ENCODE measurements at regions of chr2 and their contacts with region 1.

Region 1: DNA sequence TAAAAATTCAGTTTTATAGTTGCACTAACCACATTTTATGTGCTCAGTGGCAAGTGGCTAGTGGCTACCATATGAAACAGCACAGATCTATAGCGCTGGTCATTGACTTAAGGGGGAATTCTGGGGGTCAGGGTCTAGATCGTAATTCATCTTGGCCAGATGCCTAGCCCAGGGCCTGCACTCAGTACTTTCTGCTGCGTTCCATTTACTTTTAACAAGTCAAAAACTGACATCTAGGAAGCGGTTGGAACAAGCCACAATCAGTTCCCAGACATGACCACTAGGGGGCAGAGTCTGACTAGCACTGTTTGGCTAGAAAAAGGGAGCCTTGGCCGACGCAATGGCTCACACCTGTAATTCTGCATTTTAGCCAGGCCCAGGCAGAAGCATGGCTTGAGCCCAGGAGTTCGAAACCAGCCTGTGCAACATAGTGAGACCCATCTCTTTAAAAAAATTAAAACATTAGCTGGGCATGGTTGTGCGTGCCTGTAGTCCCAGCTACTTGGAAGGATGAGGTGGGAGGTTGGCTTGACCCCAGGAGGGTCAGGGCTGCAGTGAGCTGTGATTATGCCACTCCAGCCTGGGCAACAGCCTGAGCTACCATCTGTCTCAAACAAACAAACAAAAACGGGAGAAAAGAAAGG is 9.0 kb upstream of the TMBIM1 start:
- DNase-seq: peak; percentile 91
- H3K4me3 ChIP-seq: no peak overlapping the region
- H3K27ac ChIP-seq: no peak overlapping the region
- H3K4me1 ChIP-seq: peaks cover 0 to 8% (median 1%) of the 10 kb centered on the region in 4 donors
- H3K27me3 ChIP-seq: no peaks in the 10 kb centered on the region
- CTCF ChIP-seq: peak; percentile 91 to 97 (median 95)
- EP300 ChIP-seq: no peak
- POLR2A ChIP-seq: no peak

Region 2: DNA sequence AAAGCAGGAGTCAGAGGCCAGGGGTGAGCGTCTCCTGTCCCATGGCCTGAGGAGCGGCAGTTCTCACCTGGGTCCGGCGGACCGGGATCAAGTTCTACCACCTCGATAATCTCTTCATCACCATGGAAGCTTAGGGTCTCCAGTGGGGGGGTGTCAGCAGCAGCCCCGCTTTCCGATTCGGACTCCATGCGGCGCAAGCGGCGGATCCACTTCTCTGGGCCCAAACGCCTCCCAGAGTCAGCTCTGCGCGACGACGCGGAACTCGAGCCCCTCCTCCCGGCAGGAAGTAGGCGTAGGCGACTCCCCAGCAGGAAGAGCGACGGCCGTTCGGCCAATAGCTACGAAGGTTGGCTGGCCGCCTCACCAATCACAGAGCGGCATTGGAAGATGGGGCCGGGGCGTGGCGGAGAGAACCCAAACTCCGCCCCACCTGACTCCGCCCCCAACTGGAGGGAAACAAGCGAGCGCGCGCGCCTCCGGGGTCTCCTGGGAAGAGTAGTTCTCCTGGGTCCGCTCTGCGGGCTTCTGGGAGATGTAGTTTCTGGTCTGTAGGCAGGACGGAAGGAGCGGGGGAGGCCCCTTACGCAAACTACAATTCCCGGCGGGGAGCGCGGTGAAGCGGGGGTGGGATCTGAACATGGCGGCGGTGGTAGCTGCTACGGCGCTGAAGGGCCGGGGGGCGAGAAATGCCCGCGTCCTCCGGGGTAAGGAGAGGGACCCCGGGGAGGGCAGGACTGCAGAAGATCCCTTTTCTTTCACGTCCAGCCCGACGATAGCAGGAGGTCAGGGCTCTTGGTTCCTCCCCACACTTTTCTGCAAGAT is 31.2 kb before region 1 on chr2 and contains the starts of genes AAMP and PNKD:
- intact Hi-C with region 1: no loop called
- DNase-seq: peak; percentile 100
- H3K4me3 ChIP-seq: peak within 1 kb of the TSS; percentile 76 to 94 (median 88)
- H3K27ac ChIP-seq: peak within 1 kb of the TSS; percentile 79 to 87 (median 84)
- H3K4me1 ChIP-seq: peaks cover 0 to 51% (median 38%) of the 10 kb centered on the region in 4 donors
- H3K27me3 ChIP-seq: no peaks in the 10 kb centered on the region
- CTCF ChIP-seq: no peak
- EP300 ChIP-seq: peak in 1 of 4 donors; percentile 10
- POLR2A ChIP-seq: peak; percentile 73 to 76
- total RNA-seq, gene AAMP: 85.7 to 103 (median 90.0) TPM
- total RNA-seq, gene PNKD: 46.8 to 95.1 (median 69.1) TPM

Region 3: GRCh38 chr2:218357236-218358159 is 56.2 kb after region 1 on chr2:
- intact Hi-C with region 1: loop called (anchors 2 kb)
- DNase-seq: no peak
- H3K4me3 ChIP-seq: no peak overlapping the region
- H3K27ac ChIP-seq: no peak overlapping the region
- H3K4me1 ChIP-seq: peaks cover 0 to 8% (median 1%) of the 10 kb centered on the region in 4 donors
- H3K27me3 ChIP-seq: no peaks in the 10 kb centered on the region
- CTCF ChIP-seq: no peak
- EP300 ChIP-seq: no peak
- POLR2A ChIP-seq: no peak

Region 4: DNA sequence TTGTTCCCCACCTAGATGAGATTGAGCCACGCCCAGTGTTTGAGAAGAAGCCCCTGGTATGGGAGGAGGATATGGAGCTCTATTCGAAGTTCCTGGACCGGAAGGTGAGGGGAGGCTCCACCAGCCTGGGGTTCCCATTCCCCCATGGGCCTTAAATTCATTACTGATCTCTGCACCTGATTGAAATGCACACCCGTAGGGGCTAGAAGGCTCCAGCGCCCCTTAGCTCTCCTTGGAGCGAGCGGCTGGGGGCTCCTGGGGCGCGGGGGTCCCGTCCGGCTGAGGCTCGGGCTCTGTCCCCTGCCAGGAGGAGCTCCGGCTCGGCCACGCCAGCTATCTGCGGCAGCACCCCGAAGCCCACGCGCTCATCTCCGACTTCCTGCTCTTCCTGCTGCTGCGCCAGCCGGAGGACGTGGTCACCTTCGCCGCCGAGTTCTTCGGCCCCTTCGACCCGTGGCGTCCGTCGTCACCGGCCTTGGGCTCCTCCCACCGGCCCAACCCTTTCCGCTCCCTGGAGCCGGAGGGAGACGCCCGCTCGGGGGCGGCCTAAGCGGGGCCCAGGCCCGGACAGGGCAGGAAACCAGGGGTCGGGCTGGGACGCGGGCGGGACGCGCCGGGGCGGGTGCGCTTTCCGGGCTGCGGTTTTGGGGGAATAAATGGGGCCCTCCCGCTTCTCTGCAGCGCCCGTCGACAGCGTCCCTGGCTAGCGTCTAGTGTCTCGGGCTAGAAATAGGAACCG is 66.3 kb after region 1 on chr2:
- intact Hi-C with region 1: no loop called
- DNase-seq: peak; percentile 94
- H3K4me3 ChIP-seq: peak overlapping the region; percentile 39 to 55 (median 49)
- H3K27ac ChIP-seq: peak overlapping the region; percentile 77 to 87 (median 82)
- H3K4me1 ChIP-seq: peaks cover 0 to 30% (median 21%) of the 10 kb centered on the region in 4 donors
- H3K27me3 ChIP-seq: no peaks in the 10 kb centered on the region
- CTCF ChIP-seq: no peak
- EP300 ChIP-seq: peak in 1 of 4 donors; percentile 41
- POLR2A ChIP-seq: peak; percentile 81 to 89

Region 5: DNA sequence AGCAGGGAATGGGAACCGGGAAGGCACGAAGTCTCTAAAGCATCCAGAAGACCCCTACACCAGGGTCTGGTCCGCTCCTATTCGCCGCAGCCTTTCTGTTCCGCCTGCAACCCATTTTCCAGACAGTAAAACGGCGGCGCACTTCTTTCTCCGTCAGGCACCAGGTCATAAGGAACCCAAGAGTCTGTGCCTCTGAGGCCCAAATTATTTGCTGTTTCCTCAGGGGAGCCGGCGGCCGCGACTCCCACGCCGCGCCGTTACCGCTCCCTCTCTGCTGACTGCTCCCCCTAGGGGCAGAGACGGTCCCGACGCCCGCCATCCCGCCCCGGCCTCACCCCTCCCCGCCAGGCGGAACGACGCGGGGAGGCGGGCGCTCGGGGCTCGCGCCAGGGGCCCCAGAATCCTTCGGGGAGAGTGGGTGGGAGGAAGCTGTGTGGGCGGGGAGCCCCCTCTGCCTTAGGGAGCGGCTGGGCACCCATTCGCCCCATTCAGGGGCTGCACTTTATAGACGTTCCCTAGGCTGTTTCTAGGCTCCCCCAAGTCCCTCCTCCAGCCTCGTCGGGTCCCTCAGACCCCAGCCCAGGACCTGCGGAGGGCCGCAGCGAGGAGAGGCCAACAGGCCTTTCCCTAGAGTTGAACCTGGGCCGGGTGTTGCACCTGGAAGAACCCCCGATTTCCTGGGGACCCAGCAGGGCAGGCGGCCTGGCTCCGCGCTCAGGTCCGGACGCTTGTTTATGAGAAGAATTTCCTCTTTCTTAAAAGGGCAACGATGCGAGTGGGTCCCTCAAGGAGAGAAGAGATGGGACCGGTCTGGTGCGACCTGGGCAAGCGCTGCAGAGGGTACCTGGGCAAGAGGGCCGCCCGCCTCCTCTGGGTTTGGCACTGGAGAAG is 94.7 kb after region 1 on chr2:
- intact Hi-C with region 1: loop called (anchors 1 kb)
- DNase-seq: peak; percentile 98
- H3K4me3 ChIP-seq: peak overlapping the region; percentile 92 to 100 (median 98)
- H3K27ac ChIP-seq: peak overlapping the region; percentile 97 to 100 (median 100)
- H3K4me1 ChIP-seq: peaks cover 0 to 38% (median 31%) of the 10 kb centered on the region in 4 donors
- H3K27me3 ChIP-seq: no peaks in the 10 kb centered on the region
- CTCF ChIP-seq: peak; percentile 89 to 97 (median 94)
- EP300 ChIP-seq: peak in 2 of 4 donors; percentile 10 to 16
- POLR2A ChIP-seq: peak; percentile 54

Region 6: GRCh38 chr2:218448934-218449333 is 147.6 kb after region 1 on chr2:
- intact Hi-C with region 1: no loop called
- DNase-seq: no peak
- H3K4me3 ChIP-seq: no peak overlapping the region
- H3K27ac ChIP-seq: no peak overlapping the region
- H3K4me1 ChIP-seq: no peaks in the 10 kb centered on the region
- H3K27me3 ChIP-seq: no peaks in the 10 kb centered on the region
- CTCF ChIP-seq: no peak
- EP300 ChIP-seq: no peak
- POLR2A ChIP-seq: no peak

Measured in sigmoid colon (tissue), 7 donors.